ENCODE measurements at regions of chr1 and their contacts with region 1.

Region 1: GRCh38 chr1:45011837-45012638 is at the start of gene UROD:
- DNase-seq: peak; percentile 91 to 94
- H3K4me3 ChIP-seq: peak within 1 kb of the TSS; percentile 75
- H3K27ac ChIP-seq: peak within 1 kb of the TSS; percentile 41
- H3K4me1 ChIP-seq: peaks cover 20% of the 10 kb centered on the region
- H3K27me3 ChIP-seq: no peaks in the 10 kb centered on the region
- CTCF ChIP-seq: no peak
- total RNA-seq, gene UROD: 77.4 and 81.1 TPM in 2 replicates

Region 2: GRCh38 chr1:44819608-44820327 is 192.3 kb before region 1 on chr1:
- CTCF ChIA-PET with region 1: no interaction called
- POLR2A ChIA-PET with region 1: interaction called, 14 read pairs
- intact Hi-C with region 1: no loop called
- DNase-seq: peak; percentile 84 to 98
- H3K4me3 ChIP-seq: peak overlapping the region; percentile 67
- H3K27ac ChIP-seq: peak overlapping the region; percentile 83
- H3K4me1 ChIP-seq: peaks cover 27% of the 10 kb centered on the region
- H3K27me3 ChIP-seq: no peaks in the 10 kb centered on the region
- CTCF ChIP-seq: no peak

Region 3: GRCh38 chr1:44947063-44947773 is 64.8 kb before region 1 on chr1:
- CTCF ChIA-PET with region 1: no interaction called
- POLR2A ChIA-PET with region 1: no interaction called
- intact Hi-C with region 1: no loop called
- DNase-seq: no peak
- H3K4me3 ChIP-seq: no peak overlapping the region
- H3K27ac ChIP-seq: no peak overlapping the region
- H3K4me1 ChIP-seq: no peaks in the 10 kb centered on the region
- H3K27me3 ChIP-seq: no peaks in the 10 kb centered on the region
- CTCF ChIP-seq: no peak

Region 4: DNA sequence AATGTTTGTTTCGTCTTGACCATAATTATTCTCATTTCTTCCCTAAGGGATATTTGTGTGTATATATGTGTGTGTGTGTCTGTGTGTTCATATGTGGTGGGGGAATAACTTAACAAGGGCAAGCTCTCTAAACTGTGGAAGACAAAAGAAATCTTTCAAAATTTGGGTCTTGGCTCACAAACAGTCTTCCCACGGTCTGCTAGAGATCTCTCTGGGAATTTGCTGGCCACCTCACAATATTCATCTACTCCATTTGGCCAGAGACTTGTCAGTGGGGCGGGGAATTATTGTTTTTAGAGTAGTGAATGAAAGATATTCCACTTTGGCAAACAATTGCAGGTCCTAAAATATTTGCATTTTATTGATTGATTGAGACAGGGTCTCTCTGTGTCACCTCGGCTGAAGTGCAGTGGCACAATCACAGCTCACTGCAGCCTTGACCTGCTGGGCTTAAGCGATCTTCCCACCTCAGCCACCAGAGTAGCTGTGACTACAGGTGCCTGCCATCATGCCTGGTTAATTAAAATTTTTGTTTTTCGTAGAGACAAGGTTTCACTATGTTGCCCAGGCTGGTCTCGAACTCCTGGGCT is 17.6 kb before region 1 on chr1:
- CTCF ChIA-PET with region 1: interaction called, 3 read pairs
- POLR2A ChIA-PET with region 1: interaction called, 22 read pairs
- intact Hi-C with region 1: no loop called
- DNase-seq: no peak
- H3K4me3 ChIP-seq: no peak overlapping the region
- H3K27ac ChIP-seq: no peak overlapping the region
- H3K4me1 ChIP-seq: no peaks in the 10 kb centered on the region
- H3K27me3 ChIP-seq: no peaks in the 10 kb centered on the region
- CTCF ChIP-seq: no peak

Region 5: GRCh38 chr1:45403298-45403697 is 391.3 kb after region 1 on chr1:
- CTCF ChIA-PET with region 1: no interaction called
- POLR2A ChIA-PET with region 1: interaction called, 16 read pairs
- intact Hi-C with region 1: no loop called
- DNase-seq: no peak
- H3K4me3 ChIP-seq: no peak overlapping the region
- H3K27ac ChIP-seq: no peak overlapping the region
- H3K4me1 ChIP-seq: peaks cover 24% of the 10 kb centered on the region
- H3K27me3 ChIP-seq: no peaks in the 10 kb centered on the region
- CTCF ChIP-seq: no peak

Region 6: DNA sequence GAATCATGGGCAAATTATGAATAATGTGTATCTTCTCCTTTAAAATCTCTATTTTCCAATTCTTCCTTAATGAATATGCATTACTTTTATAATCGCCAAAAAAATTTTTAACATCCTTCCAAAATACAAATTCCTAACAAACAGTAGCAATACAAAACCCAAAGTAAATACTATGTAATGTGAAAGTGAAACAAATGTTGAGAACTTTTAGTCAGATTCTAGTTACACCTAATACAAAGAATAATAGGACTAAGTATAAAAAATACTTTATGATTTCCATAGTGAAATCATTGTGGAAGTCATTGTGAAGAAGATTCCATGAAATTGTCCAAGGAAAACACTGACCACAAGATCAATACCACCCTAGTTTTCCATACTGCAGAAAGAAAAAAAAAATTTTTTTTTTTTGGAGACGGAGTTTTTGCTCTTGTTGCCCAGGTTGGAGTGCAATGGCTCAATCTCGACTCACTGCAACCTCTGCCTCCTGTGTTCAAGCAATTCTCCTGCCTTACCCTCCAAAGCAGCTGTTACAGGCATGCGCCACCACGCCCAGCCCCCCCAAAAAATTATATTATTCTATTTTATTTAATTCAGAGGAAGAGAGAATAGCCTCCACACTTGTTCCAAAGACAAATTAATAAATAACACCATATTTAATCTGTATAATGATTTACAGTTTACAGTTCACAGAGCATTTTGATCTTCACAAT is 467.2 kb after region 1 on chr1:
- CTCF ChIA-PET with region 1: no interaction called
- POLR2A ChIA-PET with region 1: no interaction called
- intact Hi-C with region 1: no loop called
- DNase-seq: no peak
- H3K4me3 ChIP-seq: no peak overlapping the region
- H3K27ac ChIP-seq: no peak overlapping the region
- H3K4me1 ChIP-seq: no peaks in the 10 kb centered on the region
- H3K27me3 ChIP-seq: no peaks in the 10 kb centered on the region
- CTCF ChIP-seq: no peak

Region 7: GRCh38 chr1:46179138-46180081 is 1167.4 kb after region 1 on chr1:
- CTCF ChIA-PET with region 1: no interaction called
- POLR2A ChIA-PET with region 1: no interaction called
- intact Hi-C with region 1: loop called (anchors 10 kb)
- DNase-seq: peak; percentile 74 to 88
- H3K4me3 ChIP-seq: peak overlapping the region; percentile 83; the same call in 1 of the 2 replicates
- H3K27ac ChIP-seq: peak overlapping the region; percentile 91
- H3K4me1 ChIP-seq: peaks cover 65% of the 10 kb centered on the region
- H3K27me3 ChIP-seq: no peaks in the 10 kb centered on the region
- CTCF ChIP-seq: peak; percentile 95

Measured in PC-9 (cell line).